Activated T-helper 1 cell treated with anti-CD3 and anti-CD28 coated beads, Interleukin-12 subunit alpha, Interleukin-12 subunit beta, Interleukin-2, Interleukin-4 antibody, amounts not matched to agents 30 ng/mL and 10 ng/mL and 1 ng/mL, durations not matched to agents 14 hours and 24 hours and 36 hours (primary cell): ENCODE measurements at regions of chr22 and their contacts with region 1.

Region 1: GRCh38 chr22:40636380-40637182 is at the start of gene MRTFA:
- DNase-seq: peak; percentile 100
- H3K4me3 Mint-ChIP-seq: peak within 1 kb of the TSS; percentile 94
- H3K27ac Mint-ChIP-seq: peak within 1 kb of the TSS; percentile 94
- H3K4me1 Mint-ChIP-seq: peaks cover 27% of the 10 kb centered on the region
- H3K27me3 Mint-ChIP-seq: no peaks in the 10 kb centered on the region
- total RNA-seq, gene MRTFA: 47.4 and 47.8 TPM in 2 replicates

Region 2: GRCh38 chr22:40044102-40044869 is 592.3 kb before region 1 on chr22:
- intact Hi-C with region 1: loop called (anchors 10 kb)
- DNase-seq: peak; percentile 98
- H3K4me3 Mint-ChIP-seq: peak overlapping the region; percentile 90
- H3K27ac Mint-ChIP-seq: peak overlapping the region; percentile 100
- H3K4me1 Mint-ChIP-seq: peaks cover 17% of the 10 kb centered on the region
- H3K27me3 Mint-ChIP-seq: peaks cover 3% of the 10 kb centered on the region

Region 3: GRCh38 chr22:40525249-40525884 is 111.2 kb before region 1 on chr22:
- intact Hi-C with region 1: loop called (anchors 2 kb)
- DNase-seq: peak; percentile 48
- H3K4me3 Mint-ChIP-seq: no peak overlapping the region
- H3K27ac Mint-ChIP-seq: peak overlapping the region; percentile 58
- H3K4me1 Mint-ChIP-seq: peaks cover 18% of the 10 kb centered on the region
- H3K27me3 Mint-ChIP-seq: no peaks in the 10 kb centered on the region

Region 4: GRCh38 chr22:40583053-40583741 is 53.4 kb before region 1 on chr22:
- intact Hi-C with region 1: loop called (anchors 2 kb)
- DNase-seq: no peak
- H3K4me3 Mint-ChIP-seq: peak overlapping the region; percentile 31
- H3K27ac Mint-ChIP-seq: peak overlapping the region; percentile 78
- H3K4me1 Mint-ChIP-seq: peaks cover 38% of the 10 kb centered on the region
- H3K27me3 Mint-ChIP-seq: no peaks in the 10 kb centered on the region

Region 5: DNA sequence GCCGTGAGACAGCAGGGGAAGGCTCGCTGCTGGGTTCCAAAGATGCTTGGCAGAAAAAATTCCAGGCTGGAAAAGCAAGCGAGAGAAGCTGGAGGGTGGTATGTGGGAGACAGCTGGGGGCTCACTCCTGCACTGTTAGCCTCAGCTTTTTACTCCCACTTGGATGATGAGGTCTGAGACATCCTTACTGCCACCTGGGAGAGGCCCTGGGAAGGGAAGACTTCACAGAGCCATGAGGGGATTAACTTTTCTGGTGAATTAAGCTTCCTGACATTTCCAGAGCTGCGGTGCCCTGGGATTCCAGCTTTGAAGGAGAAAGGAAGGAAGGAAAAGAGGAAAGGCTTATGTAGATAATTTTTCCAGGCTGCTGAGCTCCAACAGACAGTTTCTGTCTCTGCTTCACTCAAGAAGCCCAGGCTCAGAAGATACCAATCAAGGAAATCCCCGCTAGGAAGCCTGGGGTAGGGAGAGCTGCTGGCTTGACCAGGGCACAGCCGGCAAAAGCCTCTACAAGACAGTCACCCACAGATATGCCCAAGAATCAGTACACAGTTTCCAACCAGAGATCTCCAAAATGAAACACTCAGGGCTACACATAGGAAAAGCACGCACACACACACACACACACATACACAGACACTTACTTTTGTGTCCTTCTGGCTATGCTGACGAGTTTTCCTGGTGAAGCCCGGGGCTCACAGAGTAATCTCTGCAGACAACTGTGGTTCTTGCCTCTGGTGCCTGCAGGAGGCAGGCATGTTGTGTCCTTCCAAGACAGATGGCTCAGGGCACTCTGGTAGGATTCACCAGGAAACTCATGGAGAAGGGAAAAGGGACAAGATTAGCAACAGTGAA is 43.6 kb after region 1 on chr22:
- intact Hi-C with region 1: loop called (anchors 1 kb)
- DNase-seq: no peak
- H3K4me3 Mint-ChIP-seq: no peak overlapping the region
- H3K27ac Mint-ChIP-seq: peak overlapping the region; percentile 12
- H3K4me1 Mint-ChIP-seq: peaks cover 38% of the 10 kb centered on the region
- H3K27me3 Mint-ChIP-seq: peaks cover 12% of the 10 kb centered on the region

Region 6: DNA sequence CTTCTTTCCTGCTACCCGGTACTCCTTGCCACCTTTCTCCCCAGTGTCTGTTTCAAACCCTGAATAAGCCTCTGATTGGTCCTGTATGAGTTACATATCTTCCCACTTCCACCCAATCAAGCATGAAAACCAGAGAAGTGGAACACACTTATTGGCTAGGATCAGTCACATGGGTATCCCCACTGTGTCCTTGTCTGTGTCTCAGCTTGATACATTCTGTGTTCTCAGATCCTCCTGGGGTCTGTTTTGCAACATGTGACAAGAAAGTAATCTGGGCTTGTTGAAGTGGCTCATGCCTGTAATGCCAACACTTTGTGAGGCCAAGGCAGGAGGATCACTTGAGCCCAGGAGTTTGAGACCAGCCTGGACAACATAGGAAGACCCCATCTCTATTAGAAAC is 66.6 kb after region 1 on chr22:
- intact Hi-C with region 1: no loop called
- DNase-seq: no peak
- H3K4me3 Mint-ChIP-seq: no peak overlapping the region
- H3K27ac Mint-ChIP-seq: no peak overlapping the region
- H3K4me1 Mint-ChIP-seq: peaks cover 19% of the 10 kb centered on the region
- H3K27me3 Mint-ChIP-seq: peaks cover under 1% of the 10 kb centered on the region

Region 7: DNA sequence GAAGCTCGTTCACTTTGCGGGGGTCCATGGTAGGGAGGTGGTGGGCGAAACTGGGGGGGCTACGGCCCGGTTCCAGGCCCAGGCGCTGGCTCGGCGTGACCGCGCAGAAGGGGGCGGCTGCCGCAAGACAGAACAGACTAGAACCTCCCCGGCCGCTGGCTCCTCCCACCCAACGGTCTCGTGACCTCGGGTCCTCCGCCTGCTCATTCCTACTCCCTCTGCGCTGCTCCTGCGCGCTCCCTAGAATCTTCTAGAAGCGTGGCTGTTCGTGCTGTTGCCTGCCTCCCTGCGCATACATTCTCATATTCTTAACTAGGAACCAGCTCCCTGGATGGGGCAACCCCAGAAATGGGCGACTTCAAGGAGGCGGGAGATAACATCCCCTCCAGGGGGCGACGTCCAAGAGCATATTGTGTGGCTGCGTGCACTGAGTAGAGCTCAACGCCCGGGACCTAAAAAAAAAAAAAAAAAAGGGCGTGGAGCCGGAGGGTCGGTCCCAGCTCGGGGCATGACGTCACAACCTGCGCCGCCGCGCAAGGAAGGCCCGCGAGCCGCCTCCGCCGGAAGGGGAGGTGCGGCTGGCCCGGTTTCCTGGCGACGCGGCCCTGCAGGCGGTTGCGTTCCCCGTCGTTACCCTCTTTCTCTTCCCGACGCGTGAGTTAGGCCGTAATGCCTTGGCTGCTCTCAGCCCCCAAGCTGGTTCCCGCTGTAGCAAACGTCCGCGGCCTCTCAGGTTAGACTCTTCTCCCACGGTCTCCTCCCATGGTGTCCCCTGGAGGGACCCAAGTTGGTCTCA is 220.1 kb after region 1 on chr22 and contains the starts of genes ST13 and XPNPEP3:
- intact Hi-C with region 1: loop called (anchors 1 kb)
- DNase-seq: peak; percentile 96
- H3K4me3 Mint-ChIP-seq: peak within 1 kb of the TSS; percentile 98
- H3K27ac Mint-ChIP-seq: peak within 1 kb of the TSS; percentile 100
- H3K4me1 Mint-ChIP-seq: peaks cover 38% of the 10 kb centered on the region
- H3K27me3 Mint-ChIP-seq: no peaks in the 10 kb centered on the region
- total RNA-seq, gene ST13: 190 and 192 TPM in 2 replicates
- total RNA-seq, gene XPNPEP3: 14.7 and 15.3 TPM in 2 replicates